Dorsolateral prefrontal cortex (tissue), 120 donors: ENCODE measurements at regions of chr9 and their contacts with region 1.

Region 1: GRCh38 chr9:104747558-104748358 is at the start of gene NIPSNAP3A:
- DNase-seq: peak; percentile 73 to 94 (median 87)
- H3K4me3 ChIP-seq: peak within 1 kb of the TSS; percentile 57 to 99 (median 87)
- H3K27ac ChIP-seq: peak within 1 kb of the TSS; percentile 60 to 96 (median 86)
- H3K27me3 ChIP-seq: no peaks in the 10 kb centered on the region
- CTCF ChIP-seq: peak in 14 of 56 donors; percentile 2 to 39 (median 14)
- total RNA-seq, gene NIPSNAP3A: 13.9 to 29.9 (median 22.9) TPM

Region 2: DNA sequence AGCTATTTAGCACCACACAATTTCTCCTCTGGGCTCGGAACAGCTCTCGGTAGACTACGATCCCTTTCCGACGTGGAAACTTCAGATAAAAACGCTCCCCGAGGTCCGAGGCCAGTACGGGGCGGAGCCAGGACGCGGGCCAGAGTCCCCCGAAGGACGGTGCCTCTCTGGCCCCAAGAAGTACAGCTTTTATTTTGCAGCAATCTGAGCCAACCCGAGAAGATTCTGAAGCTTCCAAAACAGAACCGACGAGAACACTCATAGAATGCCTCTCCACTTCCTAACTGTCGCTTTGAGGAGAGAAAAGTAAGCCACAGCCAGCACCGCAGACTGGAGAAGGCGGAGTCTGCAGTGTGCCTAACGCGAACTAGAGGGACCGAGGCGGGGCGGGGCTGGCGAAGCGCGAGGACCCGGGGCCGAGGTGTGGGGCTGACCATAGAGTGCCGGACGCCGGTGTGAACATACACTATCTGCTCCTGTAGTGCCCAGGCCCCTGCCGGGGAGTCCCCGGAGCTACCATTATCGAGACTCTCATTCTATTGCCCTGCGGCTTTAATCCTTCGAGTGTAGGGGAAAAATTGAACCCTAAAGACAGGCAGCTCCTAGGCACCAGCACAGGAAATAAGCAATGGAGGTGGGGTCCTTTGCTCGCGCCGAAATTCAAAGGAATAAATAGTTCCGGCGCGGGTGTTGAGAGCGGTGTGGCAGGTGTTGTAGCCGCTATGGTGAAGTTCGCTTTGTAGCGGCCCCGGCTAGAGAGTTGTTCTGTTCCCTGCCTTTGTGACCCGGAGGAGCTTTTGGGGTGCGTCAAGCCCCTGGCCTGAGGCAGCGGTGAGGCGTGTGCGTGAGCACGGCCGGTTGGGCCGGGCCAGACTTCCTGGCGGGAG is 653.9 kb before region 1 on chr9 and contains the start of gene SMC2:
- intact Hi-C with region 1: loop called in 1 of 2 experiments (anchors 10 kb)
- DNase-seq: peak; percentile 83 to 95 (median 93)
- H3K4me3 ChIP-seq: peak within 1 kb of the TSS; percentile 53 to 98 (median 76)
- H3K27ac ChIP-seq: peak within 1 kb of the TSS; percentile 49 to 99 (median 96)
- H3K27me3 ChIP-seq: no peaks in the 10 kb centered on the region
- CTCF ChIP-seq: peak in 13 of 56 donors; percentile 5 to 36 (median 18)
- total RNA-seq, gene SMC2: 5.0 to 17.8 (median 11.6) TPM